ENCODE measurements at regions of chr17 and their contacts with region 1.

Region 1: DNA sequence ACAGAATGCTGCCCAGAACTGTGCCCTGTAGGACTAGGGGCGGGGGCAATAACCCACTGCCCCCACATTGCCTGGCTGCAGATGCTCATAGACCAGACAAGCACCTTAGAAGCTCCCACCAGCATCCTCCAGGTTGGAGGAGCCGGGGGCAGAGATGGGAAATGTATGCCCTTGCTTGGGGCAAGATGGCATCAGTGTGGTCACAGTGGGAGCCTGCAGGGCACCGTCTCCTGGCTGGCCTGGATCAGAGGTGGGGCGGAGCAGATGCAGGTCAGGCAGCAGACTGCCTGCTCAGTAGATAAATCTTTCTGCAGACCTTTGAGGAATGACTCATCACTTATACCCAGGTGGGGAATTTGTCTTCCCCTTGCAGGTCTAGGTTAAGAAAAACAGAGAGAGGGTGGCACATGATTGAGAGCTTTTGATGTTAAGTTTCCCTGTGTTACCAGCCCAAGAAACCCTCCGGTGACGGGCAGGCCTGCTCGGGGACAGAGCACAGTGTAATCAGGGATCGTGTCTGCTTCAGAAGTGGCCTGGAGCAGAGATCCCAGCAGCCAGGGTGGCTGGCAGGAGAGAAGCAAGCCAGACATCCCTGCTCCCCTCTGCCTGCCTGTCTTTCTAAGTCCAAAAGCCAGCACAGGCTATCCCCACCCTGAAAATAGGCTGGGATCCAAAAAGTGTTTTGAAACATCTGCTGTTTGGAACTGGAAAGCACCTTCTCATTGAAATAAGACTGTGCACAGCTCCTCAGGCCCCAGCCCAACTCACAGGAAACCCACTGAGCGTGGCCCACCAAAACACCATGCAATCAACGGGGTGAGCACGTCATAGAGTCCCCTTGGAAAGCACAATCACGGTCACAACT is 50.7 kb upstream of the RPL38 start:
- DNase-seq: peak; percentile 91
- H3K4me3 ChIP-seq: no peak overlapping the region
- H3K27ac ChIP-seq: peak overlapping the region in 1 of 2 experiments; percentile 96; a peak in 2 of 4 replicates
- H3K4me1 ChIP-seq: peaks cover 0 to 37% of the 10 kb centered on the region in 2 experiments; a peak in 2 of 4 replicates
- H3K27me3 ChIP-seq: no peaks in the 10 kb centered on the region
- CTCF ChIP-seq: no peak
- EP300 ChIP-seq: peak in 1 of 2 experiments; percentile 90; a peak in 2 of 4 replicates
- RAD21 ChIP-seq: peak; percentile 38

Region 2: GRCh38 chr17:73976676-73977521 is 175.9 kb before region 1 on chr17:
- CTCF ChIA-PET with region 1: no interaction called
- POLR2A ChIA-PET with region 1: no interaction called
- DNase-seq: peak; percentile 61
- H3K4me3 ChIP-seq: no peak overlapping the region
- H3K27ac ChIP-seq: no peak overlapping the region
- H3K4me1 ChIP-seq: peaks cover 0 to 29% of the 10 kb centered on the region in 2 experiments; a peak in 1 of 4 replicates
- H3K27me3 ChIP-seq: no peaks in the 10 kb centered on the region
- CTCF ChIP-seq: no peak
- EP300 ChIP-seq: no peak
- RAD21 ChIP-seq: no peak

Region 3: GRCh38 chr17:74118504-74118903 is 34.3 kb before region 1 on chr17:
- CTCF ChIA-PET with region 1: interaction called, 18 read pairs
- POLR2A ChIA-PET with region 1: no interaction called
- DNase-seq: peak; percentile 71
- H3K4me3 ChIP-seq: no peak overlapping the region
- H3K27ac ChIP-seq: no peak overlapping the region
- H3K4me1 ChIP-seq: peaks cover 0 to 17% of the 10 kb centered on the region in 2 experiments; a peak in 1 of 4 replicates
- H3K27me3 ChIP-seq: no peaks in the 10 kb centered on the region
- CTCF ChIP-seq: no peak
- EP300 ChIP-seq: no peak
- RAD21 ChIP-seq: 0 out of 2 replicates have a peak, but pooled peaks have one; percentile 18

Region 4: GRCh38 chr17:74192950-74193781 is 40.3 kb after region 1 on chr17:
- CTCF ChIA-PET with region 1: no interaction called
- POLR2A ChIA-PET with region 1: no interaction called
- DNase-seq: no peak
- H3K4me3 ChIP-seq: no peak overlapping the region
- H3K27ac ChIP-seq: no peak overlapping the region
- H3K4me1 ChIP-seq: peaks cover 0 to 13% of the 10 kb centered on the region in 2 experiments; a peak in 1 of 4 replicates
- H3K27me3 ChIP-seq: peaks cover 34% of the 10 kb centered on the region
- CTCF ChIP-seq: no peak
- EP300 ChIP-seq: no peak
- RAD21 ChIP-seq: no peak

Region 5: DNA sequence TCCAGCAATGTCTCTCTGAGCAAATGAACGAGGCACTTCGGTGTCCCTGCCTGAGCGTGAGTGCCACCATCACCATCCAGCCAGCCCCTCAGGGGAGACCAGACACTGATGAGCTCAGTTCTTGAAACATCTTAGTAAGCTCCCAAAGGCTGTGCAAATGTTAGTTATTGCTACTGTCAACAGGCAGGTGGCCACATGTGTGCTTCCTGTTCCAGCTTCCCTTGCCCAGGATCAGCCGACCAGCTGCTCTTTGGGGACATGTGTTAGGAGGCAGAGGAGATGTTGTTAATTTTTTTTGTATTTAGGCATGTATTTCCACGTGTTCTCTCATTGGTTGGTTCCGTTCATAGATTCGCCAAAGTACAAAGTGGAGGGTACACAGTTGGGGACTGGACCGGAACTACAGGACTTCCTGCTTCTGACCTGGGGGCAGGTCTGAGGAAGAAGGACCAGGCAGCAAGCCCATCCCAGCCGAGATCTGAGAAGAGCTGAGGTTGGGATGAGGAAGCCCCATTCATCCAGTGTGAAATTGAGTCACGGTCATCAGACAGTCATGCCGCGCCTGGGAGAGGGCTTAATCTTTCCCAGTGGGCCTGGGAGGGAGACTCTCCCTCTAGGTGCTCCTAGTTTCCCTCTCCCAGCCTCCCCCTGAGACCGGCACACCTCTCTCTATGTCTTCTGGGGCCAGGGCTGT is 64.4 kb after region 1 on chr17:
- CTCF ChIA-PET with region 1: no interaction called
- POLR2A ChIA-PET with region 1: no interaction called
- DNase-seq: no peak
- H3K4me3 ChIP-seq: no peak overlapping the region
- H3K27ac ChIP-seq: no peak overlapping the region
- H3K4me1 ChIP-seq: peaks cover 4 to 50% of the 10 kb centered on the region in 2 experiments; a peak in 2 of 4 replicates
- H3K27me3 ChIP-seq: no peaks in the 10 kb centered on the region
- CTCF ChIP-seq: no peak
- EP300 ChIP-seq: no peak
- RAD21 ChIP-seq: no peak